ENCODE measurements at regions of chr12 and their contacts with region 1.

Region 1: GRCh38 chr12:26097046-26097878 is 27.6 kb downstream of the BHLHE41 start:
- DNase-seq: peak; percentile 74 to 82
- H3K4me3 ChIP-seq: peak overlapping the region; percentile 12; the same call in 1 of the 2 replicates
- H3K27ac ChIP-seq: peak overlapping the region; percentile 66
- H3K4me1 ChIP-seq: peaks cover 66% of the 10 kb centered on the region
- H3K27me3 ChIP-seq: no peaks in the 10 kb centered on the region
- CTCF ChIP-seq: peak; percentile 95

Region 2: GRCh38 chr12:25653487-25654175 is 443.6 kb before region 1 on chr12:
- CTCF ChIA-PET with region 1: no interaction called
- POLR2A ChIA-PET with region 1: no interaction called
- intact Hi-C with region 1: no loop called
- DNase-seq: no peak
- H3K4me3 ChIP-seq: no peak overlapping the region
- H3K27ac ChIP-seq: no peak overlapping the region
- H3K4me1 ChIP-seq: peaks cover 24% of the 10 kb centered on the region
- H3K27me3 ChIP-seq: no peaks in the 10 kb centered on the region
- CTCF ChIP-seq: no peak

Region 3: DNA sequence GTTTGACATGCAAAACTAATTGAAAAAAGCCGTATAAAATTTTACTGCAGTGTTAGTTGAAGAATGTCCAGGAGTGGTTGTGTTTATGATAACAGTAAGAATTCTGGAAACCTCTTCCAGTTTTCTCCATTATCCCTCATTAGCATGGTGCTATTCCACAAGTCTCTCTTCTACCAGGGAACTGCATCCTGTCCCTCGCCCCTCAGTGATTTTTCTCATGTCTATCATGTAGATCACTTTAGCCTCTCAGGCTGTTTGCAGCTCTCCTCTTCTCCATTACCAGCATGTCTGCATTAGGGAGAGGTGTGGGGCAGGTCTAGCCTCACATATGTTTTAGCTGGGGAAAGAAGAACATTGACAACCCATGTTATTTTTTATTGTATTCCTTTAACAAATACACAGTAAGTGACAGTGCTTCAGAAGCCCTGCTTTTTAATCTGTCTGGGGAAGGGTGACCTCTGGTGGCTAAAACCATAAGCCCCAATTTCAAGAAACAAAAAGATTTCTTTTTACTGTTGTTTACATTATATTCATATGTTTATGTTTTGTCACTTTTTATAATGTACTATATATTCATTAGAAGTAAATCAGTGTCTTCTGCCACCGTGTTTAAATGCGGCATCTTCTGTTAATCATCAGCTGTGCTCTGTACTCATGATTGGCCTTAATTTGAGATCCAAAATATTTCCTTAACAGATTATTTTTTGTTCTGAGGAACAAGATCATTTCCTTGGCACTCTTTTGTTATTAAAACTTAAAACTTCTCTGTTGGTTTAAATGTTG is 68.1 kb before region 1 on chr12:
- CTCF ChIA-PET with region 1: interaction called, 5 read pairs
- POLR2A ChIA-PET with region 1: no interaction called
- intact Hi-C with region 1: loop called (anchors 5 kb)
- DNase-seq: peak in 1 of 2 experiments; percentile 42
- H3K4me3 ChIP-seq: no peak overlapping the region
- H3K27ac ChIP-seq: no peak overlapping the region
- H3K4me1 ChIP-seq: peaks cover 16% of the 10 kb centered on the region
- H3K27me3 ChIP-seq: no peaks in the 10 kb centered on the region
- CTCF ChIP-seq: peak; percentile 87

Region 4: DNA sequence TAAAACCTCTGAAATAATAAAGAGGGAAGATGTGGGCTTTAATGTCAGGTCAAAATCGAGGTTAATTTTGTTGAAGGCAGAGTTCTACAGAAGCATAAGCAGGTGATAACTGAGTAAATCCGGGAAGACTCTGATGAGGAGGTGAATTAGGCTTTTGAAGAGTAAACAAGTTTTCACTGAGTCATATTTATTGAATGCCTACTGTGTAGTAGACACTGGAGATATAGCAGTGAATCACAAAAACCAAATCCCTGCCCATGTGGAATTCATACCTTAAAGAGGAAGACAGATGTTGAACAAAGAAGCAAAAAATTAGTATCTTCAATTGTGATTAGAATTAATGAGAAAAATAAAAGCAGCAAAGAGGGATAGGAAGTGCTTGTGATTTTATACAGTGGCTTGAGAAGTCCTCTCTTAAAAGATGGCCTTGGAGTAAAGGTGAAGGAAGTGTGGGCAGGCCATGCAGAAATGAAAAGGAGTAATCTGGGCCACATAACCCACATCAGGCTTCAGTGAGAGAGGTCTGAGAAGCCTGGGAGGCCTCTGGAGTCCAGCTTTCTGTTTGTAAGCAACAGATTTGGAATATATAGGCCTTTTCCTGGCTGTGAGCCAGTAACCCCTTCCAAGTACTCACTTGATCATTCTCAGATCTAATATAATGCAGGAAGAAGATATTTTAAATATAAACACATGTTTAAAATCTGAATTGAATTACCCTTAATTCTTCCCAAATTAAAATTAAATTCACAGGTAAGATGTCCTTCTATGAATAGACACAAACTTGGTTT is 19.2 kb before region 1 on chr12:
- CTCF ChIA-PET with region 1: no interaction called
- POLR2A ChIA-PET with region 1: no interaction called
- intact Hi-C with region 1: no loop called
- DNase-seq: peak in 1 of 2 experiments; percentile 60
- H3K4me3 ChIP-seq: no peak overlapping the region
- H3K27ac ChIP-seq: no peak overlapping the region; the same call in 1 of the 2 replicates
- H3K4me1 ChIP-seq: peaks cover 12% of the 10 kb centered on the region
- H3K27me3 ChIP-seq: no peaks in the 10 kb centered on the region
- CTCF ChIP-seq: no peak

Region 5: DNA sequence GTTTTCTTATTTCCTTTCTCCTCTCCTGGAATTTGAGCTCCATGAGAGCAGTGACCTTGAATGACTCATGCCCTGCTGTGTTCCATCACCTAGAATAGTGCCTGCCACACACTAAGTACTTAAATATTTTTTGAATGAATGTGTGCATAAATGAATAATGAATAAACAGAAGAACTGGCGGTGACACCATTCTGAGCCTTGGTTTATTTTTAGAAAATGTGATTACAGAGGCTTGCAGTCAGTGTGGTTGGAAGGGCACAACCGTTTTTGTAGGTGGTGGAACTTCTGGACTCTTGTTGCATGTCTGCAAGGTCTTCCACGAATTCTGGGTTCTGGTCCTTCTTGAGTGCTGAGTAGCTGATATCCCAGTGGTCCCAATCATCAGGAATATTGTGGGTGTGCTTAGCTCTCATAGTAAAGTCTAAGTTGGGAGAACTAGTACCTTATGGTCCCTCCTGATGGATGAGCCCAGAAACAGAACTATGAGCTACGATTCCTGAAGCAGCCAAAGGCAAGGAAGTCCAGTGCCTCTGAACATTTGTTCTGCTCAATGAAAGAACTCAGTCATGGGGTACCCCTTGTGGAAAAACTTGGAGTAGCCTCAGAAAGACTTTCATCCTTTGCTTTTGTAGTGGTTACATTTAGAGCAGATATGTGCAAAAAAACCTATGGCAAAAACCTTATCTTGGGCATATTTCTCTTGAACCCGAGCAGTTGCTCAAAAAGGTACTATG is 56.3 kb after region 1 on chr12:
- CTCF ChIA-PET with region 1: no interaction called
- POLR2A ChIA-PET with region 1: no interaction called
- intact Hi-C with region 1: loop called (anchors 2 kb)
- DNase-seq: peak; percentile 61 to 97
- H3K4me3 ChIP-seq: peak overlapping the region; percentile 17; the same call in 1 of the 2 replicates
- H3K27ac ChIP-seq: peak overlapping the region; percentile 75
- H3K4me1 ChIP-seq: peaks cover 49% of the 10 kb centered on the region
- H3K27me3 ChIP-seq: no peaks in the 10 kb centered on the region
- CTCF ChIP-seq: peak; percentile 43; the same call in 1 of the 2 replicates

Region 6: GRCh38 chr12:26402648-26403047 is 305.4 kb after region 1 on chr12:
- CTCF ChIA-PET with region 1: interaction called, 3 read pairs
- POLR2A ChIA-PET with region 1: no interaction called
- intact Hi-C with region 1: loop called (anchors 1 kb)
- DNase-seq: peak; percentile 77 to 93
- H3K4me3 ChIP-seq: no peak overlapping the region
- H3K27ac ChIP-seq: peak overlapping the region; percentile 44
- H3K4me1 ChIP-seq: peaks cover 22% of the 10 kb centered on the region
- H3K27me3 ChIP-seq: no peaks in the 10 kb centered on the region
- CTCF ChIP-seq: peak; percentile 55

Region 7: DNA sequence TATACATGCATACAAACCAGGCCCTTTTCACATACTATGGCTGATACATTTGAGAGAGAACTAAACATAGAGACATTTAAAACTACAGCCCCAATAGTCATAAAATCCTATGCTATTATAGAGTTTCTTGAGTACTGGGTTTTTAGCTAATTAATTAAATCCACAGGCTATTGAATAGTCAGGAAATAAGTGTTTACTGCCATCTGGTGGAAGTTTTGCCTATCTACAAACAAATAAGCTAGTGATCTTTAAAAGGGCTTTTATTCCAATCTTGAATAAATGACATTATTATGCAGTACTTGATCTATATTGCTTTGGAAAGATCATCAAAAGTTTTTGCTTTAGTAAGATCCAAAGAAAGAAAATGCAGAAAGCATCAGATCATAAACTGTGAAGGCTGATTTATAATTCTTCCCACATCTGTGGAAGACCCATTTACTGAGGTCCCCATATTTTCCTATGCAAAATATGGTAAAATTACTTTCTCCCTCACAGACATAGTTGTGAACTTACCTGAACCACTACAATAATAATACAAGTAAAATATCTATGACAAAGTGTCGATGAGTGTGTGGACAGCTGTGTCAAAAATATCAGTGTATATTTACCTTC is 604.4 kb after region 1 on chr12:
- CTCF ChIA-PET with region 1: no interaction called
- POLR2A ChIA-PET with region 1: interaction called, 11 read pairs
- intact Hi-C with region 1: loop called (anchors 2 kb)
- DNase-seq: peak in 1 of 2 experiments; percentile 40
- H3K4me3 ChIP-seq: no peak overlapping the region
- H3K27ac ChIP-seq: no peak overlapping the region
- H3K4me1 ChIP-seq: peaks cover 7% of the 10 kb centered on the region; the same call in 1 of the 2 replicates
- H3K27me3 ChIP-seq: no peaks in the 10 kb centered on the region
- CTCF ChIP-seq: peak; percentile 78